PC-9 (cell line): ENCODE measurements at regions of chr6 and their contacts with region 1.

Region 1: GRCh38 chr6:34867484-34867883 is 20.4 kb downstream of the TAF11 start:
- DNase-seq: no peak
- H3K4me3 ChIP-seq: no peak overlapping the region
- H3K27ac ChIP-seq: no peak overlapping the region
- H3K4me1 ChIP-seq: no peaks in the 10 kb centered on the region
- H3K27me3 ChIP-seq: no peaks in the 10 kb centered on the region
- CTCF ChIP-seq: no peak

Region 2: DNA sequence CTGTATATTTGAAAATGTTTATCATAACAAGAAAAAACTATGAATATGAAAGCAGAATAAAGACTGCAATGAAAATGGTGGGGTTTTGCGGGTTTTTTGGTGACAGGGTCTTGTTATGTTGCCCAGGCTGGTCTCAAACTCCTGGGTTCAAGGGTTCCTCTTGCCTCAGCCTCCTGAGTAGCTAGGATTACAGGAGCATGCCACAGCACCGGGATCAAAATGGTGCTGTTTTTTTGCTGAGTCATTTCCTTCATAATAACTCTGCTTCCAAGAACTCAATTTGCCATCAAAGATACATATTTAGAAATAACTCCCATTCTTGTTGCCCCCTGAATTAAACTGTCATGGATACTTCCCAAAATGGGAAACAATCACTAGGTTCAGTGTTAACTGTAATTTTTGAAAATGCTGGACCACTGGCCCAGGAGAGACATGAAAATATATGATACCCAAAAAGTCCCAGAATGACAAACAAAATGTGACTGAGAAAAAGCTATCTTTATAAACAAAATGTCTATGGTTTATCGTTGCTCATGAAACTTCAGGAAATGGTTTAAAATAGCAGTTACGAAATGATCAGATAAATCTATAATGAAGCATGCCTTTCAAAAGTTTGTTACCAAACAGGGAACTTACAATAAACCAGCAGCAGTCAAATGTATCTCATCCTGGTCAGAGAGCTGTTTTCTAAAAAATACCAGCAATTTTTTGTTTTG is 203.1 kb before region 1 on chr6:
- CTCF ChIA-PET with region 1: no interaction called
- POLR2A ChIA-PET with region 1: no interaction called
- intact Hi-C with region 1: no loop called
- DNase-seq: no peak
- H3K4me3 ChIP-seq: no peak overlapping the region
- H3K27ac ChIP-seq: peak overlapping the region; percentile 70
- H3K4me1 ChIP-seq: peaks cover 13% of the 10 kb centered on the region
- H3K27me3 ChIP-seq: no peaks in the 10 kb centered on the region
- CTCF ChIP-seq: no peak

Region 3: DNA sequence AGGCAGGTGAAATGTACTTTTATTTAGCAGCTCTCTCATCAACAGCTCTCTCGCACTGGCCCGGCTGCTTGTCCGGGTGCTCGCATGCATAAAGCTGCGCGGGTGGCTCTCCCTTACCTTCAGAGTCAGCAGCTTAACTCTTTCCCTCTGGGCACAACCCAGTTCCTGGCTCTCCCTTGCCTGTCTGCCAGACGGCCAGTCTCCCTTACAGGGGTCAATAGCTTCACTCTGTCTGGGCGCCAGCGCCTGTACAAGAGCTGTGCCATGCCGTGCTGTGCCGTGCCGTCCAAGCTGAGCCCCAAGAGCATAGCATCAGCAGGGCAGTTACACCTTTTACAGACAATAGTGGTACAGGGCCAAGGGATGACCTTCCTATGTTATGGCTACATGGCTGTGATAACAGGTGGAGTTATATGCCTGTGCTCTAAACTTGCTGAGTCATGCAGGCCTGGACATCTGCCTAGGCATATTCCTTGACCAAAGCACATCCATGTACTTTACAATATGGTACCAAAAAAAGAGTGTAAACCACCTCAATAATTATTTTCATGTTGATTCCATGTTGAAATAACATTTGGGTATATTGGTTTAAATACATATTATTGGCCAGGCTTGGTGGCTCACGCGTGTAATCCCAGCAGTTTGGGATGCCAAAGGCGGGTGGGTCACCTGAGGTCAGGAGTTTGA is 27.7 kb before region 1 on chr6:
- CTCF ChIA-PET with region 1: interaction called, 11 read pairs
- POLR2A ChIA-PET with region 1: interaction called, 4 read pairs
- intact Hi-C with region 1: no loop called
- DNase-seq: no peak
- H3K4me3 ChIP-seq: no peak overlapping the region
- H3K27ac ChIP-seq: no peak overlapping the region
- H3K4me1 ChIP-seq: peaks cover 11% of the 10 kb centered on the region
- H3K27me3 ChIP-seq: no peaks in the 10 kb centered on the region
- CTCF ChIP-seq: no peak